ENCODE measurements at regions of chr21 and their contacts with region 1.

Region 1: GRCh38 chr21:14403681-14404318 is 20.9 kb upstream of the HSPA13 start:
- DNase-seq: peak; percentile 63
- H3K4me3 Mint-ChIP-seq: no peak overlapping the region
- H3K27ac Mint-ChIP-seq: no peak overlapping the region
- H3K4me1 Mint-ChIP-seq: peaks cover 5% of the 10 kb centered on the region
- H3K27me3 Mint-ChIP-seq: peaks cover 4% of the 10 kb centered on the region

Region 2: GRCh38 chr21:14773777-14774345 is 370.1 kb after region 1 on chr21:
- intact Hi-C with region 1: loop called (anchors 2 kb)
- DNase-seq: peak; percentile 88
- H3K4me3 Mint-ChIP-seq: no peak overlapping the region
- H3K27ac Mint-ChIP-seq: no peak overlapping the region
- H3K4me1 Mint-ChIP-seq: no peaks in the 10 kb centered on the region
- H3K27me3 Mint-ChIP-seq: peaks cover 10% of the 10 kb centered on the region

Region 3: GRCh38 chr21:14864211-14865021 is 460.6 kb after region 1 on chr21:
- intact Hi-C with region 1: loop called (anchors 5 kb)
- DNase-seq: peak; percentile 82
- H3K4me3 Mint-ChIP-seq: no peak overlapping the region
- H3K27ac Mint-ChIP-seq: no peak overlapping the region
- H3K4me1 Mint-ChIP-seq: peaks cover 6% of the 10 kb centered on the region
- H3K27me3 Mint-ChIP-seq: peaks cover 4% of the 10 kb centered on the region

Region 4: DNA sequence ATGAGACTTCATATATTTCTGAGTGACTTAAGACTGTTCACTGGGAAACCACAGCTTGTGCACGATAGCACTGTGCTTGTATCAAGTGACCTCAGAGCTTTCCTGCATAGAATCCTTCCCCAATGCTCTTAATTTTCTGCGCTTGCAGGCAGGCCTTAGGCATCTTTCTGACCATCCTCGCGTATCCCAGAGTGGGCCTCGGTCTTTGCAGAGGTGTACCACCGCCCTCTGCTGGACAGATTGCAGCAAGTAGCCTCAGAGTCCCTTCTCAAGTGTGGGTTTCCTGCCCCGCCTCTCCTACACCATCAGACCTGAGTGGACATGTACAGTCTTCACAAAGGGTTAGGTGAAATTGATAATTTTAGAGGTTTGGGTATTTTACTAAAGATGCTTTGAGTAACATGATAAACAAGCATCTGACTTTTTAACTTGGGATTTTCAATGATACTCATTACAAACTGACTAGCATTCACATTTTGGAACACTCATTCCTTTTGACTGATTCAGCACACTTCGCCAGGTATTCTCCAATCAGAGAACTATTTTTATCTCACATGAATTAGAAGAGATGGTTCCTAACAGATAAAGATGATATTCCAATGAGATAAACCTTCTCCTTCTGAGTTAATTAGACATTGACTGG is 1079.5 kb after region 1 on chr21:
- intact Hi-C with region 1: loop called (anchors 5 kb)
- DNase-seq: peak; percentile 92
- H3K4me3 Mint-ChIP-seq: no peak overlapping the region
- H3K27ac Mint-ChIP-seq: no peak overlapping the region
- H3K4me1 Mint-ChIP-seq: peaks cover 17% of the 10 kb centered on the region
- H3K27me3 Mint-ChIP-seq: peaks cover 3% of the 10 kb centered on the region

Region 5: GRCh38 chr21:15592271-15592860 is 1188.6 kb after region 1 on chr21:
- intact Hi-C with region 1: loop called (anchors 5 kb)
- DNase-seq: peak; percentile 67
- H3K4me3 Mint-ChIP-seq: no peak overlapping the region
- H3K27ac Mint-ChIP-seq: no peak overlapping the region
- H3K4me1 Mint-ChIP-seq: no peaks in the 10 kb centered on the region
- H3K27me3 Mint-ChIP-seq: peaks cover 16% of the 10 kb centered on the region